Breast epithelium (tissue), 4 donors: ENCODE measurements at regions of chr1 and their contacts with region 1.

Region 1: DNA sequence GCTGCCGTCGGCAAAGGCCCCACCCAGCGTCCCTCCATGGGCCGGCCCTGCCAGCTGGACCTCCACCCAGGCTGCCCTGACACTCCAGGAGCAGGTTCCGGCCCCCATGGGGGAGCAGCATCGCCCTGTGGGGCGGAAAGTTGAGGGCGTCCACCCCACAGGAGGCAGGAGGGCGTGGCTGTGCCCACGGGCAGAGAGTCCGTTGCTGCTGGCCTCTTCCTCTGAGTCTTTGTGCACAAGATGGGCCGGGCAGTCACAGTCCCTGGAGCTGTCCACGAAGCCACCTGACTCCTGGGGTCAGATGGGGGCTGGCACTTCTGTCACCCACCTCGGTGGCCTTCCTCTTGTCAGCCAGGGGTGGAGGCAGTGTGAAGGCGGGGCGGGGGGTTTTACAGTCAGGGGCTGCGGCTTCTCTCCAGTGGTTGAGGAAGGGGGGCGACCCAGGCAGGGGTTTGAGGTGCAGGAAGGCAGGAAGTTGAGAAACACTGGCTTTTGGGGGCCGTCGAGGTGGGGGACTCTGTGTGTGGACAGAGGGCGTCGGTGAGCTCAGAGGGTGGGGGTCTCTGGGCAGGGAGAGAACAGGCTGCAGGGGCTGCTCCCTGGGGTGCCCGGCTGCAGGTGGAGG is 67.2 kb upstream of the TTC34 start:
- DNase-seq: no peak
- H3K4me3 ChIP-seq: no peak overlapping the region
- H3K27ac ChIP-seq: no peak overlapping the region
- H3K4me1 ChIP-seq: no peaks in the 10 kb centered on the region
- H3K27me3 ChIP-seq: peaks cover 0 to 74% of the 10 kb centered on the region in 2 donors
- CTCF ChIP-seq: no peak
- POLR2A ChIP-seq: no peak

Region 2: DNA sequence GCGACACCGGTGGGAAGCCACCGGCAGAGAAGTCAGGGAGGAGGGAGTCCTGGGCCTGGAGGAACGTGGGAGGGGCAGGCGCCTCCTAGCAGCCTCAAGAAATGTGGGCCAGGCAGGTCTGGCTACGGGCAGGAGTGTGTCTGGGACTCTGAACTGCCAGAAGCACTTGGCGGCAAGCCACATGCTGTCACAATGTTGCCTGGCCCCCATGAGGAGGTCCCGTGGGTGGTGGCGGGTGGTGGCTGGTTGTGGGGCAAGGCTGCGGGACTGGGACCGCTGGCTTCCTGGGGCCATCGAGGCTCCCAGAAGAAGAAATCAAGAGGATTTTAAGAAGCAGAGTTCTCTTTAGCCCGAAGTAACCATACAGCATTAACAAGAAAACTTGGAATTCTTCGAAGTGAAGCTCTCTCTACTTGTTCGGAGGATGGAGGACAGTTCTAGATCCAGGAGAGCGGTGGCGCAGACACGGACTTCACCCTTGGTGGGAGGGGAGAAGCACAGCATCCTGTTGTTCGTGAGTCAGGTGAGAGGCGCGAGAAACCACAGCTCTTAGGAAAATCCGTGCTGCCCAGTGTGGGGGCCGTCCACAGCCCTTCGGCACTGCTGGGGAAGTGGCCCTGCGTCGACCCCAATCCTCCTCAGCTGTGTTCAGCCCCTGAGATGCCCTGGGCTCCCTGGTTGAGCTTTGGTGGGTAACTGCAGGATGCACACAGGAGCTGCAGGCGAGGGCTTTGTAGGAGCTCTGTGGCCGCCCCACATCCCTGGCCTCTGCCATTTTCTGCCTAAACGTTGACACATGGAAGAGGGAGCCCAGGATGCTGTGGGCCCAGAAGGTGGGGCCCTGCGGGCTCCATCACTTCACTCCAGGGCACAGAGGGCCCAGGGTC is 628.2 kb before region 1 on chr1:
- intact Hi-C with region 1: no loop called
- DNase-seq: peak; percentile 84
- H3K4me3 ChIP-seq: peak overlapping the region in 2 of 3 donors; percentile 3 to 50
- H3K27ac ChIP-seq: peak overlapping the region; percentile 74 to 82
- H3K4me1 ChIP-seq: peaks cover 43 to 58% of the 10 kb centered on the region in 2 donors
- H3K27me3 ChIP-seq: no peaks in the 10 kb centered on the region
- CTCF ChIP-seq: no peak
- POLR2A ChIP-seq: no peak

Region 3: GRCh38 chr1:2821966-2822620 is 46.6 kb before region 1 on chr1:
- intact Hi-C with region 1: loop called (anchors 1 kb)
- DNase-seq: no peak
- H3K4me3 ChIP-seq: no peak overlapping the region
- H3K27ac ChIP-seq: no peak overlapping the region
- H3K4me1 ChIP-seq: no peaks in the 10 kb centered on the region
- H3K27me3 ChIP-seq: peaks cover 0 to 71% of the 10 kb centered on the region in 2 donors
- CTCF ChIP-seq: peak in 2 of 3 donors; percentile 31 to 32
- POLR2A ChIP-seq: no peak